Vagina (tissue), 2 donors: ENCODE measurements at regions of chr17 and their contacts with region 1.

Region 1: DNA sequence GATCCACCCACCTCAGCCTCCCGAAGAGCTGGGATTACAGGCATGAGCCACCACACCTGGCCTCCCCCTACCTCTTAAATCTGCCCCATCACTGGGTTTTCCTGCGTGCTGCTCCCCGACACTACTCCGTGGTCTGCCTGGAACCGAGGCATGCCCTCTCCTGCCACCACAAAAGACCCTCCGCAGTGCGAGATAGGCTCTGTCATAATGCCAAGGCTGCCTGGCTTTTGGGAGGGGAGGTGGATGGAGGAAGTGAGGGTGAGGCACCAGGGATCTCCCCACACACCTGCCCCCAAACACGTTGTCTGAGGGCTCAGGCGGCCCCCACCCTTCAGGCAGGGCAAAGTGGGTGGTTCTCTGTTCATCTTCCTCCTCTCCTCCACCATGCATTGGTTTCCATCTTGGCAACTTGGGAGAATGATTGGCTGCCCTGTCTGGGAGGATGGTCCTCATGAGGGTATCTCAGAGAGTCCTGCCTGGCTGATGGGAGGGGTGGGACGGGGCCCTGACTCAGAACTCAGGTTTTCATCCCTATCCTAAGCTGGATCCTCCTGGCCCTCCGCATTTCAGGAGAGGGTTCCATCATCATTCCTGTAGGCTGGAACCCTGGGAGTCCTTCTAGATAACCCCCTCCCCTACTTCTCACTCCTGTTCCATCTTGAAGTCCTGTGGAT is 23.2 kb downstream of the IGFBP4 start:
- DNase-seq: no peak
- H3K4me3 ChIP-seq: no peak overlapping the region
- H3K27ac ChIP-seq: no peak overlapping the region
- H3K4me1 ChIP-seq: peaks cover 24% of the 10 kb centered on the region
- H3K27me3 ChIP-seq: no peaks in the 10 kb centered on the region
- CTCF ChIP-seq: no peak
- POLR2A ChIP-seq: no peak

Region 2: DNA sequence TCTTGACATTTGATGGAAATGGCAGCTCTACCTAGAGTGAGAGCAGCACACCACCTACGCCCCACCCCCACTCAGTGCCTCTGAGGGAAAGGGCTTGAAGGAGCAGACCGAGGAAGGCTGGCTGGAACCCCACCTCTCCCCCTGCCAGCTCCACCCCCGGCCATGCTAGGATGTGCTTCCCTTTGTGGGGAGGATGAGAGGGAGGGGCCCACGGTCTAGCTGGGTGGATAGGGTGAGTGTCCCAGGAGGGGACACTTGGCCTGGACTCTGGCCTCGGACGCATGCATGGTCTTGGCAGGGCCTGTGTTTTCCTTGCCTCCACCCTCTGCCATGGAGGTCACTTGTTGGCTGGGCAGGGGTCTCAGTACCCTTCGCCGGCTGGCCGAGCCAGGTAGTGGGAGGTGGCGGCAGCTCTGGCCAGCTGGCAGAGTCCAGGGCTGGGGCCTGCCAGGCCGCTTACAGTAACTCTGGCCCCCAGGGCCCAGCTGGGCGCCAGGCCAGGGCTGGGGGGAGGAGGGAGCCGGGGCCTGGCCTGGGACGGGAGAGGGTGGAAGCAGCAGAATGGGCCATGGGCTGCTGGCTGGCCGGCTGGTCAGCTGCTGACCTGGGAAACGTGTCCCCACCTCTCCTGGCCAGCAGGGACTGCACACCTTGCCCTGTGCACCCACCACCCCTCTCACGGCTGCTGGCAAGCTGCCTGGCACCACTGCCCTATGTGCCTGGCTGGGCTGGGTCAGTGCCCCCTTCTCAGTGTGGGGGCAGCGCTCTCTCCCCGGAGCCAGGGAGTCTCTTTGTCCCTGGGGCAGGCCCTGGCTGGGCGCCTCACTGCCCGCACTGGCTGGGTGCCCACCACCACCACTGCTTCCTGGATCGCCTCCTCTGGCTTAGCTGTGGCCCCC is 134.4 kb before region 1 on chr17:
- intact Hi-C with region 1: no loop called
- DNase-seq: no peak
- H3K4me3 ChIP-seq: peak overlapping the region in 1 of 2 donors; percentile 28
- H3K27ac ChIP-seq: peak overlapping the region; percentile 81
- H3K4me1 ChIP-seq: peaks cover 100% of the 10 kb centered on the region
- H3K27me3 ChIP-seq: no peaks in the 10 kb centered on the region
- CTCF ChIP-seq: no peak
- POLR2A ChIP-seq: no peak

Region 3: DNA sequence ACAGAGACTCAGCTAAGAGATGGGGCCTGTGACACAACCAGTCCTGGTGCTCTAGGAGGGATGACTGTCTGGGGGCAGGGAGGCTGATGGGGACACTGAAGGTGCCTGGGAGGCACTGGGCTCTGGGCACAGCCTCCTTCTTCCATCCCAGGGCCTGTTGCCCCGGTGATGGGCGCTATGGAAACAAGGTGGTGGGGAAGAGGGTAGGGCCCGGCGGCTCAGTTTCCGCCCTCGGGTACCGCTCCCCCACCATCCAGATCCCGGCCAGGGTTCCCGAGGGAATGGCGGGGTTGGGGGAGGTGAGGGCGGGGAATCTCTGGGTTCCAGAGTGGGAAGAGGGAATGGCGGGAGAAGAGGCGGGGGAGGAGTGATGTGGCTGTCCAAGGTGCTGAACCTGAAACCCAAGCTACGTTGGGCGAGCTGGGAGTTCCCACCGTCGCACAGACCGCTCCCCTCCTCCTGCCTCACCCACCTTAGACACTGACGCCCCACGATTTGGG is 1713.5 kb after region 1 on chr17:
- intact Hi-C with region 1: loop called (anchors 5 kb)
- DNase-seq: no peak
- H3K4me3 ChIP-seq: no peak overlapping the region
- H3K27ac ChIP-seq: no peak overlapping the region
- H3K4me1 ChIP-seq: peaks cover 23% of the 10 kb centered on the region
- H3K27me3 ChIP-seq: peaks cover 8% of the 10 kb centered on the region
- CTCF ChIP-seq: no peak
- POLR2A ChIP-seq: no peak